OCI-LY7 (cell line): ENCODE measurements at regions of chr7 and their contacts with region 1.

Region 1: GRCh38 chr7:107168233-107169119 is at the start of gene HBP1:
- DNase-seq: peak; percentile 99
- H3K4me3 ChIP-seq: peak within 1 kb of the TSS; percentile 80
- H3K27ac ChIP-seq: peak within 1 kb of the TSS; percentile 70
- H3K4me1 ChIP-seq: peaks cover 11% of the 10 kb centered on the region
- CTCF ChIP-seq: no peak
- total RNA-seq, gene HBP1: 9.3 and 10.9 TPM in 2 replicates

Region 2: DNA sequence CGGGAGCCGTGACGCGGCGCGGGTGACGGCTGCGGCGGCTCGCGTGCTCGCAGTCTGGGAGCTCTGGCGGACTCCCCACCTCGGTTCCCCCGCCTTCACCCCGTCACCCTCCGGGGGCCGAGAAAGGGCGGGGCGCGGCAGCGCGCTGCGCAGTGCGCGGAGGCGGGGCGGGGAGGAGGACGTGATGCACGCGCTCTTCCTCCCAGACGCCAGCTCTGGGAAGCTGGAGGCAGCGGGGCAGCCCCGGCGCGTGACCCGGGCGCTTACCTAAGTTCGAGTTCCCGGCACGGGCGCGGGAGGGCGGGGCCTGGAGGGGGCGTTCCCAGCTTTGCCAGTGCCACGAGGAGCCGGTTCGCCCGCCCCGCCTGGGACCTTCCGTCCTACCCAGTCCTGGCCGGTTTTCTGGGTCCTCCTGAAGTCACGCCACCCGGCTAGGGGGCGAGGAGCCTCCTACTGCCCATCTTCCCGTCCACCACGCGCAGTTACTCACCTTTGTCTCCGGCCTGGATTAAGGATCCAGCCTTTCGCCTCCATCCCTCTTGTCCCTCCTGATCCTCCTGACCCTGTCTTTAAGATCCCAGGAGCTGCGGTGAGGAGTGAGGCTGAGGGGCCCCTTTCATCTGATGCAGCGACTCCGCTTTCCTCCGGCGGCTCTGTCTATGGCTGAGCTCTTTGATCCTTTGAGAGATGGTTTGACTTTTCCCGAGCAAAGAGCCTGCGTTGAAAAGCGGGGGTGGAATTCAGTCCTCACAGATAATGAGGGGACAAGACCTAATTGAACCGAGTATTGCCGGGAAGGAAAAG is 883.2 kb before region 1 on chr7:
- CTCF ChIA-PET with region 1: no interaction called
- POLR2A ChIA-PET with region 1: no interaction called
- intact Hi-C with region 1: loop called (anchors 10 kb)
- DNase-seq: peak; percentile 95
- H3K4me3 ChIP-seq: peak overlapping the region; percentile 90
- H3K27ac ChIP-seq: peak overlapping the region; percentile 61
- H3K4me1 ChIP-seq: peaks cover 23% of the 10 kb centered on the region
- CTCF ChIP-seq: no peak

Region 3: DNA sequence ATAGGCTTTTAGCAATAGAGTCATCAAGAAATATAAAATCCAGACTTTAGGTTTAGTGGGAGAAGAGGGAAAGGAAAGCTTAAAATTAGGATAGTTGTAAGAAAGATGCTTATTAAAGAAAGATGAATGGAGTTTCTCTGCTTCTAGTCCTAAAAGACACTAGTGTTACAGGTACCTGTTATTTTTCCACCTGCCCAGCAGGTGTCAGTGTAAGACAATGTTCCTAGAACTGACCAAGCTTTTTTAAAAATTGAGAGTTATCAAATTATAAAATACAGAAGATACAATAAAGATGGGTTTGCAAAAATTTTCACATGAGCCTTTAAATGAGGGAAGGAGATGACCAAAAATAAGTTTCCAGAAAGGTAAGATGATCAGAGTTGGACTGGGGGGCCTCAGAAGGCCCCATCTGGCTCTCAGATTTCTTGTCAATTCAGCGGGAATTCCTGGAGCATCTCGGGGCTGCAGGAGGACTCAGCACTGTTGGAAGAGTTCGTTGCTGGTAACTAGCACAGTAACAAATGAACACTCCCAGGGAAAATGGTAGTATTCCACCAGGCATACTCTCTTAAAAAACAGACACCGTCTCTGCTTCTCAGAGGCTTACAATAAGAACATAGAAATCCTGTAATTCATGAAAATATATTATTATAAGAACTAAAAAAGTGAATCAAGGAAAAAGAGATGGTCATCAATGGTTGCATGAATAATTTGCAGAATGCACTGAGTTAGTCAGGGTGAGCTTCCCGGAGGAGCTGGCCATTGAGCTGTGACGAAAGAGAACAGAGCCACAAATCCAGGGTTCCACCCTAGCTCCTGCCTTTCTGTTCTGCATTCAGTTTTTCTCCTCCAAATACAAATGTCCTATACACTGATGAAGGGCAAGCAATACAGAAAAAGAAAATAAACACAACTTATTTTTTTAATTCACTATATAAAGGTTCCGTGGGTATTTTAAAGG is 375.2 kb before region 1 on chr7:
- CTCF ChIA-PET with region 1: no interaction called
- POLR2A ChIA-PET with region 1: no interaction called
- intact Hi-C with region 1: loop called (anchors 5 kb)
- DNase-seq: peak; percentile 70
- H3K4me3 ChIP-seq: no peak overlapping the region
- H3K27ac ChIP-seq: no peak overlapping the region
- H3K4me1 ChIP-seq: no peaks in the 10 kb centered on the region
- CTCF ChIP-seq: peak; percentile 96

Region 4: GRCh38 chr7:106870983-106871410 is 297.5 kb before region 1 on chr7:
- CTCF ChIA-PET with region 1: no interaction called
- POLR2A ChIA-PET with region 1: interaction called, 3 read pairs
- intact Hi-C with region 1: loop called (anchors 2 kb)
- DNase-seq: peak; percentile 84
- H3K4me3 ChIP-seq: peak overlapping the region; percentile 65
- H3K27ac ChIP-seq: peak overlapping the region; percentile 79
- H3K4me1 ChIP-seq: peaks cover 64% of the 10 kb centered on the region
- CTCF ChIP-seq: no peak

Region 5: DNA sequence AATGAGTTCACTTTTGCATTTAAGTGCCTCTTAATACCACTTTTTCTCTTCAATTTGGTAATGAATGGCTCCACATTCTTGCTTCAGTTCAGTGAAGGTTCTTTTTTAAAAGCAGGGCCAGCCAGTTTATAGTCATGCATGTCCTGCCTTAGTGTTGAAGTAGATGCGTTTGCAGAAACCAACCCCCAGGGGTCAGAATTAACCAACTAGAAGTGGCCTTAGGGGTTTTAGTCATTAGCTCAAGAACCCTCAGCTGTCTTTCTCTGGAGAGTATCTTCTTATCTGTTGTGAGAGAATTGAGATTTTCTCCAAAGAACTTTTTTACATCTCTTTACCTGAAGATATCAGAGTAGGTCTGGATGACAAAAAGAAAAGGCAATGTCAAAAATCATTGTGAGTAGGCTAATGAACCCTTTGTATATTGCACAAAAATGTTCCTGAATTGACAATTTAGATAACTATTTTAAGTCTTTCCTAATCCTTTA is 221.2 kb before region 1 on chr7:
- CTCF ChIA-PET with region 1: interaction called, 9 read pairs
- POLR2A ChIA-PET with region 1: interaction called, 7 read pairs
- intact Hi-C with region 1: loop called (anchors 1 kb)
- DNase-seq: peak; percentile 92
- H3K4me3 ChIP-seq: no peak overlapping the region
- H3K27ac ChIP-seq: no peak overlapping the region
- H3K4me1 ChIP-seq: peaks cover 18% of the 10 kb centered on the region
- CTCF ChIP-seq: peak; percentile 99

Region 6: DNA sequence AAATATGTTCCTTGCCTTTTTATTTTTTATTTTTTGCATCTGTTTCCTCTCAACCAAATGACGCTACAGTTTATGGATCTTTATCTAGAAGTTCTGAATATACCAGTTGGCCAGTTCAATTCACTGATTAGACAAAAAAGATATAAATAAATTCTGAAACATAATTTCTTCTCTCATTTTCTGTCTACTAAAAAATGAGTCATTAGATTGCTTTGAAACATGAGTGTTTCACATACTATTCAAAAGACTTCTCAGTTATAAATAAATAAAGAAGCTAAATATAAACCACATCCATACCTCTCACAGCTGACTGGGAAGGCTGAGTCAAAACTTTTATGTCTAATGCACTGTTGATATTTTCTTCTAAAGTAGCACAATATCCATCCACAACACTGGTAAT is 203.8 kb after region 1 on chr7:
- CTCF ChIA-PET with region 1: no interaction called
- POLR2A ChIA-PET with region 1: no interaction called
- intact Hi-C with region 1: no loop called
- DNase-seq: no peak
- H3K4me3 ChIP-seq: no peak overlapping the region
- H3K27ac ChIP-seq: no peak overlapping the region
- H3K4me1 ChIP-seq: no peaks in the 10 kb centered on the region
- CTCF ChIP-seq: no peak

Region 7: GRCh38 chr7:108335272-108335918 is 1166.9 kb after region 1 on chr7:
- CTCF ChIA-PET with region 1: no interaction called
- POLR2A ChIA-PET with region 1: no interaction called
- intact Hi-C with region 1: no loop called
- DNase-seq: no peak
- H3K4me3 ChIP-seq: no peak overlapping the region
- H3K27ac ChIP-seq: no peak overlapping the region
- H3K4me1 ChIP-seq: no peaks in the 10 kb centered on the region
- CTCF ChIP-seq: no peak